Adrenal gland (tissue), 19 donors: ENCODE measurements at regions of chr15 and their contacts with region 1.

Region 1: GRCh38 chr15:43285609-43286037 is 18.9 kb upstream of the TGM5 start:
- DNase-seq: peak; percentile 34 to 77 (median 56)
- H3K4me3 ChIP-seq: no peak overlapping the region
- H3K27ac ChIP-seq: no peak overlapping the region
- H3K4me1 ChIP-seq: no peaks in the 10 kb centered on the region
- H3K27me3 ChIP-seq: peaks cover 6% of the 10 kb centered on the region
- CTCF ChIP-seq: peak; percentile 68 to 96 (median 91)
- POLR2A ChIP-seq: no peak

Region 2: GRCh38 chr15:43225201-43225949 is 60.2 kb before region 1 on chr15:
- intact Hi-C with region 1: loop called (anchors 2 to 5 kb)
- DNase-seq: peak; percentile 37 to 72 (median 45)
- H3K4me3 ChIP-seq: no peak overlapping the region
- H3K27ac ChIP-seq: no peak overlapping the region
- H3K4me1 ChIP-seq: no peaks in the 10 kb centered on the region
- H3K27me3 ChIP-seq: no peaks in the 10 kb centered on the region
- CTCF ChIP-seq: peak; percentile 59 to 74 (median 70)
- POLR2A ChIP-seq: no peak